Naive thymus-derived CD8-positive, alpha-beta T cell (primary cell): ENCODE measurements at regions of chr1 and their contacts with region 1.

Region 1: GRCh38 chr1:36166136-36166535 is 10.2 kb downstream of the MAP7D1 start:
- DNase-seq: peak in 1 of 10 donors; percentile 6
- ATAC-seq: no peak
- H3K4me3 Mint-ChIP-seq: peak overlapping the region in 5 of 10 donors; percentile 10 to 30 (median 14)
- H3K27ac Mint-ChIP-seq: peak overlapping the region; percentile 8 to 89 (median 83)
- H3K4me1 Mint-ChIP-seq: peaks cover 46 to 83% (median 73%) of the 10 kb centered on the region in 4 donors
- H3K27me3 Mint-ChIP-seq: no peaks in the 10 kb centered on the region

Region 2: DNA sequence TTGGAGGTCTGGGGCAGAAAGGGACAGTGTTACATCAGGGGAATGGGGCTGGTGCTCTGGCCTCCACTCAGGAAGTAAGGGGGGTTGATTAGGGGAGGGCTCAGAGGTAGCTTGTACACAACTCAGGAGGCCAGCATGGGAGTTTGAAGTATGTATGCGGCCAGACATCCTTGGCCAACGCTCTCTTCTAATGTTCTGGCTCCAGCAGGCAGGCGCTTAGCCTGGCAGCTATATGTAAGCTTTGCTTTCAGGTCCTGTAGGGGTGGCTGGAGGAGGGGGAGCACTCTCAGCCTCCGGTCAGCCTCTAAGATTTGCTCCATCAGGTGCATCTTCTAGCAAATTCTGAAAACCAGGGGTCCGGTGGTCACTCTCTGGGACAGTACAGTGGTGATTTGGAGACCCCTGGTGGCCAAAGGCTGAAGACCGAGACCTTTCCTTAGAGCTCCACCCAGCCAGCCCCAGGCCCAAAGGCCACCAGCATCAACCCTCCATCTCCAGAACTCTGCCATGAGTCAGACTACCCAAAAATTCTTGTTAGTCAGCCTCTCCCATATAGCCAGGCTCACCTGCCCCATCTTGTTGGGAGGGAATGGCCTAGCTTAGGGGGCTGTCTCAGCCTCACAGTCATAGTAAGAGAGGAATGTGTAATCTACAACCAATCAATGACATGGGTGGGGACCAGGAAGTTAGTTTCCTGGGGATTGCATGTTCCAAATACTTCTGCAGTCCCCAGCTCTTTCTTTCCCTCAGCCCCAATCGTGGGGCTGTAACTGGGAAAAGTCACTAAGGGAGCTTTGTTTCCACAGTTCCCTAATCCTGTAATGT is 31.4 kb before region 1 on chr1:
- POLR2A ChIA-PET with region 1: no interaction called
- DNase-seq: peak in 7 of 10 donors; percentile 36 to 76 (median 49)
- ATAC-seq: peak; percentile 52 to 89
- H3K4me3 Mint-ChIP-seq: no peak overlapping the region
- H3K27ac Mint-ChIP-seq: peak overlapping the region; percentile 29 to 79 (median 70)
- H3K4me1 Mint-ChIP-seq: peaks cover 6 to 15% (median 9%) of the 10 kb centered on the region in 4 donors
- H3K27me3 Mint-ChIP-seq: no peaks in the 10 kb centered on the region

Region 3: GRCh38 chr1:36155408-36156328 is 10.5 kb before region 1 on chr1 and contains the start of gene MAP7D1:
- POLR2A ChIA-PET with region 1: interaction called, 173 read pairs
- DNase-seq: peak; percentile 75 to 98 (median 82)
- ATAC-seq: peak; percentile 68 to 79
- H3K4me3 Mint-ChIP-seq: peak within 1 kb of the TSS; percentile 85 to 95 (median 93)
- H3K27ac Mint-ChIP-seq: peak within 1 kb of the TSS; percentile 93 to 99 (median 95)
- H3K4me1 Mint-ChIP-seq: peaks cover 41 to 83% (median 75%) of the 10 kb centered on the region in 4 donors
- H3K27me3 Mint-ChIP-seq: no peaks in the 10 kb centered on the region
- polyA plus RNA-seq, gene MAP7D1: 13.3 to 67.1 (median 20.1) TPM

Region 4: GRCh38 chr1:36187800-36188593 is 21.9 kb after region 1 on chr1:
- POLR2A ChIA-PET with region 1: interaction called, 29 read pairs
- DNase-seq: peak; percentile 57 to 92 (median 80)
- ATAC-seq: peak; percentile 98 to 99
- H3K4me3 Mint-ChIP-seq: no peak overlapping the region
- H3K27ac Mint-ChIP-seq: peak overlapping the region; percentile 57 to 91 (median 74)
- H3K4me1 Mint-ChIP-seq: peaks cover 3 to 13% (median 8%) of the 10 kb centered on the region in 4 donors
- H3K27me3 Mint-ChIP-seq: no peaks in the 10 kb centered on the region

Region 5: GRCh38 chr1:36248250-36248894 is 82.2 kb after region 1 on chr1:
- POLR2A ChIA-PET with region 1: no interaction called
- DNase-seq: no peak
- ATAC-seq: no peak
- H3K4me3 Mint-ChIP-seq: peak overlapping the region in 3 of 10 donors; percentile 4 to 30 (median 19)
- H3K27ac Mint-ChIP-seq: peak overlapping the region in 5 of 10 donors; percentile 19 to 76 (median 61)
- H3K4me1 Mint-ChIP-seq: peaks cover 29 to 75% (median 66%) of the 10 kb centered on the region in 4 donors
- H3K27me3 Mint-ChIP-seq: no peaks in the 10 kb centered on the region

Region 6: GRCh38 chr1:36471830-36472641 is 305.9 kb after region 1 on chr1:
- POLR2A ChIA-PET with region 1: no interaction called
- DNase-seq: no peak
- ATAC-seq: no peak
- H3K4me3 Mint-ChIP-seq: no peak overlapping the region
- H3K27ac Mint-ChIP-seq: no peak overlapping the region
- H3K4me1 Mint-ChIP-seq: no peaks in the 10 kb centered on the region
- H3K27me3 Mint-ChIP-seq: no peaks in the 10 kb centered on the region